ENCODE measurements at regions of chr6 and their contacts with region 1.

Region 1: GRCh38 chr6:36340618-36341454 is 4.1 kb upstream of the BNIP5 start:
- DNase-seq: peak; percentile 78
- H3K4me3 Mint-ChIP-seq: peak overlapping the region; percentile 7
- H3K27ac Mint-ChIP-seq: no peak overlapping the region
- H3K4me1 Mint-ChIP-seq: peaks cover 10% of the 10 kb centered on the region
- H3K27me3 Mint-ChIP-seq: peaks cover 66% of the 10 kb centered on the region

Region 2: GRCh38 chr6:36094753-36095496 is 245.9 kb before region 1 on chr6:
- CTCF ChIA-PET with region 1: no interaction called
- DNase-seq: peak; percentile 85
- H3K4me3 Mint-ChIP-seq: no peak overlapping the region
- H3K27ac Mint-ChIP-seq: peak overlapping the region; percentile 11
- H3K4me1 Mint-ChIP-seq: peaks cover 31% of the 10 kb centered on the region
- H3K27me3 Mint-ChIP-seq: no peaks in the 10 kb centered on the region

Region 3: GRCh38 chr6:36241728-36242127 is 99.1 kb before region 1 on chr6:
- CTCF ChIA-PET with region 1: no interaction called
- DNase-seq: no peak
- H3K4me3 Mint-ChIP-seq: no peak overlapping the region
- H3K27ac Mint-ChIP-seq: no peak overlapping the region
- H3K4me1 Mint-ChIP-seq: peaks cover 25% of the 10 kb centered on the region
- H3K27me3 Mint-ChIP-seq: peaks cover 38% of the 10 kb centered on the region

Region 4: DNA sequence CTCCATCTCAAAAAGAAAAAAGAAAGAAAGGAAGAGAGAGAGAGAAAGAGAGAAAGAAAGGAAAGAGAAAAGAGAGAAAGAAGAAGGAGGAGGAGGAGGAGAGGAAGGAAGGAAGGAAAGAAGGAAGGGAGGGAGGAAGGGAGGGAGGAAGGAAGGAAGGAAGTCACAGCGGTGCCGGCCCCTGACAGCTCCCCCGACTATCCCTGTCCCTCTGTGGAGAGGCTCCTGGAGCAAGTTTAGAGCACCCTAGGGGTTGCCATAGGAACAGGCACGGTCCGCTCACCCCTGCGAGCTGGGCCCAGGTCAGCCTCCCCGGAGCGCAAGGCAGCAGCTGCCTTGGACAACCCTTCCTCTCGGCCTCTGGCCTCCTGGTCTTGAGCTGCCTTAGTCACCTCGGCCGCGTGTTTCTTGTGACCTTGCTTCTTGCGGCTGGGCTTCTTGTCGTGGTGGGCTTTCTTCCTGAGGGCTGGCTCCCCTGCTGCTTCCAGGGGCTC is 11.0 kb before region 1 on chr6:
- CTCF ChIA-PET with region 1: interaction called, 11 read pairs
- DNase-seq: no peak
- H3K4me3 Mint-ChIP-seq: no peak overlapping the region
- H3K27ac Mint-ChIP-seq: no peak overlapping the region
- H3K4me1 Mint-ChIP-seq: no peaks in the 10 kb centered on the region
- H3K27me3 Mint-ChIP-seq: peaks cover 60% of the 10 kb centered on the region

Region 5: DNA sequence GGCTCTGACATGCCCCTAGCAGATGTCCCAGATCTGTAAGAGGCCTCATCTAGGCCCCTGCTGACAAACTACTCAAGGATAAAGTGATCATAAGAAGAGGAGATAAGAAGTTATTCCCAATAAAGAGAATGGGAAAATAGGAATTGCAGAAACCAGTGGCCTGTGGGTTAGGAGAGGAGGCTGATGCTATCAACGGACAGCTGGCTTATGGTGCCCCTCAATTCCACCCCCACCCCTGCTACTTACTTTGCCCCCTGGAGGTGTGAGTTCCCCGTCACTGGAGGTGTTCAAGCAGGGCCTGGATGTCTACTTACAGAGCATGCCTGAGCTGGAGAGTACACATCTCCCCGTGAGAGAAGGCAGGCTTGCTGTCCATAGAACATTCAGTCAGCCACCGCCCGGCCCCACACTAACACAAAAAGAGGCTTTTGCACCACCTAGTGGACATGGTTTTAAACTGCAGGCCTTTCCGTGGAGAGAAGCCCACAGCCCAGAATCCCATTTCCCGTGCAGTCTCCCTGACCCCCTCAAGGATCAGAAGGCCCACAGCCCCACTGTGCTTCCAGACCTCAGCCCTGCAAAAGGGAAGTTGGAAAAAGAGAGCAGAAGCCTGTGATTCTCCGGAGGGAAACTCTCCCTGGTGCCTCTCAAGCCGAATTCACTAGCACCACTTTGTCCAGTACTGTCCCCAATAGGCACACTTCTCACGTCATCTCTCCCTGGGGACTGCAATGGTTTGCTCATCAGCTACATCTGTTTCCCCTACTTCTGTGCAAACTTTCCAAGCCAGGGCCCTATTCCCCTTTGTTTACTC is 19.6 kb after region 1 on chr6:
- CTCF ChIA-PET with region 1: interaction called, 42 read pairs
- DNase-seq: peak; percentile 80
- H3K4me3 Mint-ChIP-seq: no peak overlapping the region
- H3K27ac Mint-ChIP-seq: no peak overlapping the region
- H3K4me1 Mint-ChIP-seq: peaks cover 21% of the 10 kb centered on the region
- H3K27me3 Mint-ChIP-seq: peaks cover 36% of the 10 kb centered on the region

Region 6: GRCh38 chr6:36660771-36661471 is 320.1 kb after region 1 on chr6:
- CTCF ChIA-PET with region 1: no interaction called
- DNase-seq: no peak
- H3K4me3 Mint-ChIP-seq: no peak overlapping the region
- H3K27ac Mint-ChIP-seq: no peak overlapping the region
- H3K4me1 Mint-ChIP-seq: peaks cover 21% of the 10 kb centered on the region
- H3K27me3 Mint-ChIP-seq: peaks cover 20% of the 10 kb centered on the region